Activated naive CD4-positive, alpha-beta T cell treated with anti-CD3 and anti-CD28 coated beads, Interleukin-2, amount 10 ng/mL, durations not matched to agents 7 days and 5 days (primary cell): ENCODE measurements at regions of chr10 and their contacts with region 1.

Region 1: GRCh38 chr10:32378363-32379317 is 31.7 kb upstream of the EPC1 start:
- DNase-seq: peak; percentile 97
- H3K4me3 Mint-ChIP-seq: no peak overlapping the region
- H3K27ac Mint-ChIP-seq: no peak overlapping the region
- H3K4me1 Mint-ChIP-seq: peaks cover 25% of the 10 kb centered on the region
- H3K27me3 Mint-ChIP-seq: no peaks in the 10 kb centered on the region

Region 2: GRCh38 chr10:32346134-32346550 is 32.5 kb before region 1 on chr10:
- CTCF ChIA-PET with region 1: interaction called, 10 read pairs
- DNase-seq: peak; percentile 97
- H3K4me3 Mint-ChIP-seq: peak overlapping the region; percentile 92
- H3K27ac Mint-ChIP-seq: peak overlapping the region; percentile 99
- H3K4me1 Mint-ChIP-seq: peaks cover 65% of the 10 kb centered on the region
- H3K27me3 Mint-ChIP-seq: peaks cover 6% of the 10 kb centered on the region

Region 3: DNA sequence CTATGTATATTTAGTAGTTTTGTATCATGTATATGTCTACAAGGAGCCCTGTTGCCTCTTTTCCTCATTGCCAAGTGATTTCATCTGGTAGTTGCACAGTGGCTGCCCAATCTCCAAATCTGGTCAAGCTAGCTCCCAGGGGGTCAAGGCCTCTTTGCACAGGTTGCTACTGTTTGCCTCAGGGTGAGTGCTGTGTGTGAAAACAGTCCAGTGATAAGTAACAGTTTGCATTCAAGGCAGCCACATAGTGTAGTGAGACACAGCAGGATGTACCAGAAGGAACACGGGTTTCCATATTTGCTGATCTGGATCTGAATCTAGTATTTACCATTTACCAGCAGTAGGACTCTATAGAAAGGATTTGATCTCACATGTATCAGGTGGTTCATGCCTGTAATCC is 18.4 kb before region 1 on chr10:
- CTCF ChIA-PET with region 1: no interaction called
- DNase-seq: no peak
- H3K4me3 Mint-ChIP-seq: no peak overlapping the region
- H3K27ac Mint-ChIP-seq: no peak overlapping the region
- H3K4me1 Mint-ChIP-seq: peaks cover 69% of the 10 kb centered on the region
- H3K27me3 Mint-ChIP-seq: no peaks in the 10 kb centered on the region